Right ventricle myocardium inferior (tissue), 1 donor: ENCODE measurements at regions of chr2 and their contacts with region 1.

Region 1: GRCh38 chr2:144456680-144457079 is 63.2 kb downstream of the ZEB2 start:
- DNase-seq: no peak
- ATAC-seq: peak; percentile 80

Region 2: GRCh38 chr2:144414324-144414845 is 42.3 kb before region 1 on chr2:
- intact Hi-C with region 1: no loop called
- DNase-seq: no peak
- ATAC-seq: peak; percentile 53

Region 3: GRCh38 chr2:144505245-144505831 is 48.7 kb after region 1 on chr2:
- intact Hi-C with region 1: loop called (anchors 5 kb)
- DNase-seq: no peak
- ATAC-seq: peak; percentile 79

Region 4: DNA sequence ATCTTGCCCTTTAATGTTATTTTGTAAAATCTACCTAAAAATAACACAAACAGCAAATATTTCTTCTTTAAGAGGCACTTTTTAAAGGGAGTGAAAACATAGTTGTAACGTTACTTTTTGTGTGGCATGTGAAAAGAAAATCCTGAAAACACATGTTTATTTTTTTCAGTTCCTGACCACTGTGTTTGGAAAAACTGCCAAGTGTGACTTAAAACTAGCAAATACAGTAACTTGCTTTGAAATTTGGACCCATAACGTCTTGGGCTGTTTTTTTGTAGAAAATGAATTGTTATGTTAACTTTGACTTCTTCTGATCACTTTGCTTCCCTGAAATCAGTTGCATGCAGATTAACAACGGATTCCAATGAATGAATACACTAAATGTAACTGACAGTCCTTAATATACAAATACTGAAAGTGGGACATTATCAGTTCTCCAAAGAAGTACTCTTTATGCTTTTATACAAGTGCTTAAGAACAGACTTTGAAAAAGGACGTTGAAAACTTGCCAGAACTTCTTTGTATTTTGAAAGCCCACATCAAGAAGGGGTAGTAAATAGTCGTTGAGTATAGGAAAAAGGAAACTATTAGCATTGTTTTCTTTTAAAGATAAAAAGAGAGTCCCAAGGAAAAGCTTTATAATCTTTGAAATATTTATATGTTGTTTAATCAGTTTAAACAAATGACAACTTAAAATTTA is 159.3 kb after region 1 on chr2:
- intact Hi-C with region 1: no loop called
- DNase-seq: no peak
- ATAC-seq: no peak